ENCODE measurements at regions of chr12 and their contacts with region 1.

Region 1: GRCh38 chr12:70365648-70366518 is at the start of gene KCNMB4:
- DNase-seq: peak; percentile 93
- H3K4me3 Mint-ChIP-seq: peak within 1 kb of the TSS; percentile 99
- H3K27ac Mint-ChIP-seq: peak within 1 kb of the TSS; percentile 86
- H3K4me1 Mint-ChIP-seq: peaks cover 18% of the 10 kb centered on the region
- H3K27me3 Mint-ChIP-seq: no peaks in the 10 kb centered on the region
- CTCF ChIP-seq: no peak
- total RNA-seq, gene KCNMB4: 6.4 and 8.4 TPM in 2 replicates

Region 2: GRCh38 chr12:69765515-69765914 is 600.4 kb before region 1 on chr12:
- CTCF ChIA-PET with region 1: no interaction called
- intact Hi-C with region 1: no loop called
- DNase-seq: no peak
- H3K4me3 Mint-ChIP-seq: no peak overlapping the region
- H3K27ac Mint-ChIP-seq: no peak overlapping the region
- H3K4me1 Mint-ChIP-seq: no peaks in the 10 kb centered on the region
- H3K27me3 Mint-ChIP-seq: no peaks in the 10 kb centered on the region
- CTCF ChIP-seq: no peak

Region 3: GRCh38 chr12:69900720-69901131 is 465.2 kb before region 1 on chr12:
- CTCF ChIA-PET with region 1: no interaction called
- intact Hi-C with region 1: loop called (anchors 10 kb)
- DNase-seq: peak; percentile 85
- H3K4me3 Mint-ChIP-seq: no peak overlapping the region
- H3K27ac Mint-ChIP-seq: no peak overlapping the region
- H3K4me1 Mint-ChIP-seq: no peaks in the 10 kb centered on the region
- H3K27me3 Mint-ChIP-seq: no peaks in the 10 kb centered on the region
- CTCF ChIP-seq: peak; percentile 92

Region 4: GRCh38 chr12:69985656-69986055 is 380.2 kb before region 1 on chr12:
- CTCF ChIA-PET with region 1: no interaction called
- intact Hi-C with region 1: loop called (anchors 5 kb)
- DNase-seq: peak; percentile 73
- H3K4me3 Mint-ChIP-seq: no peak overlapping the region
- H3K27ac Mint-ChIP-seq: no peak overlapping the region
- H3K4me1 Mint-ChIP-seq: no peaks in the 10 kb centered on the region
- H3K27me3 Mint-ChIP-seq: no peaks in the 10 kb centered on the region
- CTCF ChIP-seq: peak; percentile 70

Region 5: GRCh38 chr12:70507442-70507841 is 141.6 kb after region 1 on chr12:
- CTCF ChIA-PET with region 1: no interaction called
- intact Hi-C with region 1: loop called (anchors 5 kb)
- DNase-seq: no peak
- H3K4me3 Mint-ChIP-seq: no peak overlapping the region
- H3K27ac Mint-ChIP-seq: peak overlapping the region; percentile 60
- H3K4me1 Mint-ChIP-seq: peaks cover 17% of the 10 kb centered on the region
- H3K27me3 Mint-ChIP-seq: no peaks in the 10 kb centered on the region
- CTCF ChIP-seq: no peak

Measured in Calu3 (cell line).